Activated T-helper 2 cell treated with anti-CD3 and anti-CD28 coated beads, Interferon-gamma antibody, Interleukin-2, Interleukin-4, amounts not matched to agents 10 μg/mL and 5 μg/mL and 100 μg/mL, durations not matched to agents 14 hours and 24 hours and 36 hours (primary cell): ENCODE measurements at regions of chr20 and their contacts with region 1.

Region 1: DNA sequence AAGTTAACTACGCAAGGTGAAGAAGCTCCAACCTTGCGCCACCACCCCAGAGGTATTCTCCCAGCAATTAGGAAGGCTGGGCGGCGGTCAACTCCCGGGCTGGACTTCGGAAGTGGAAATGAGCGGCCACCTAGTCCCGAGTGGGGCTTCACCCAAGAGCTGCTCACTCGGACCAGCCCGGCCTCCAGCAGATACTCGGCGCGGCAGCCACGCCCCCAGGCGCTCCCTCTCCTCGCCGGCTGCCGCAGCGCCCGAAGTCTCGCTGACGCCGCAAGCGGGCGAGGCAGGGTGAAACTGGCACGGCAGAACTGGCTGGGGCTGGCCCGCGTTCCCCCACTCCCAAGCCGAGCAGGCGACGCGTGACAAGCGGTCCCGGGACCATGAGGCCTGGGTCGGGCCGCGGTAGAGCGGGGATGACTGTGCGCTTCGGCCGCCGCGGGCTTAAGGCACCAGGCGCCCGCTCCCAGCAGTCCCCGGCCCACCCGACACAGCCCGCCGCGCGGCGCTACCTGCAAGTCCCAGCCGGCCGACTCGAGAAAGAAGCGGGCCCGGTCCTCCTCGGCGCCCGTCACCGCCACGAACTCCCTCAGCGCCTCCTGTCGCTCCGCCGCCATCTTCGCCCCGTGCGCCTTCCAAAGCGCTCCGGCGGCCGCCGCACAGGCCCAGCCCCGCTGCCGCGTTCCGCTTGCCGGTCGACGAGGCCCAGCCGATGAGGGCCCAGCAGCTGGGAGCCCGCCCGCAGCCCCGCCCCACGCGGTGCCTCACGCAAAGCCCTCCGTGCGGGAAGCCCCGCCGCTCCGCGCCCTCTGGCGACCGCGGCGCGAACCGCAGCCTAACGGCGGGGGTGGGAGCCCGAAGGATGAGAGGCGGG is at the start of gene NSFL1C:
- DNase-seq: peak; percentile 97
- H3K4me3 Mint-ChIP-seq: peak within 1 kb of the TSS; percentile 85
- H3K27ac Mint-ChIP-seq: peak within 1 kb of the TSS; percentile 79
- H3K4me1 Mint-ChIP-seq: peaks cover 39% of the 10 kb centered on the region
- H3K27me3 Mint-ChIP-seq: peaks cover 16% of the 10 kb centered on the region
- total RNA-seq, gene NSFL1C: 108 TPM in 2 replicates

Region 2: GRCh38 chr20:1118336-1119127 is 347.9 kb before region 1 on chr20 and contains the start of gene PSMF1:
- intact Hi-C with region 1: loop called (anchors 1 kb)
- DNase-seq: peak; percentile 96
- H3K4me3 Mint-ChIP-seq: peak within 1 kb of the TSS; percentile 91
- H3K27ac Mint-ChIP-seq: peak within 1 kb of the TSS; percentile 79
- H3K4me1 Mint-ChIP-seq: peaks cover 42% of the 10 kb centered on the region
- H3K27me3 Mint-ChIP-seq: no peaks in the 10 kb centered on the region
- total RNA-seq, gene PSMF1: 175 and 182 TPM in 2 replicates